CD8-positive, alpha-beta memory T cell (primary cell): ENCODE measurements at regions of chr20 and their contacts with region 1.

Region 1: GRCh38 chr20:62143118-62143973 is at the starts of genes PSMA7 and SS18L1:
- DNase-seq: peak; percentile 77 to 88 (median 87)
- H3K4me3 ChIP-seq: peak within 1 kb of the TSS; percentile 61
- H3K4me3 Mint-ChIP-seq: peak within 1 kb of the TSS; percentile 89 to 98 (median 92)
- H3K27ac ChIP-seq: peak within 1 kb of the TSS; percentile 72
- H3K27ac Mint-ChIP-seq: peak within 1 kb of the TSS; percentile 91 to 99 (median 96)
- H3K4me1 ChIP-seq: peaks cover 29% of the 10 kb centered on the region
- H3K4me1 Mint-ChIP-seq: peaks cover 40 to 64% (median 44%) of the 10 kb centered on the region in 3 donors
- H3K27me3 ChIP-seq: no peaks in the 10 kb centered on the region
- H3K27me3 Mint-ChIP-seq: peaks cover 0 to 2% of the 10 kb centered on the region in 2 donors
- total RNA-seq, gene PSMA7: 447 to 464 TPM
- total RNA-seq, gene SS18L1: 16.9 to 18.5 TPM

Region 2: DNA sequence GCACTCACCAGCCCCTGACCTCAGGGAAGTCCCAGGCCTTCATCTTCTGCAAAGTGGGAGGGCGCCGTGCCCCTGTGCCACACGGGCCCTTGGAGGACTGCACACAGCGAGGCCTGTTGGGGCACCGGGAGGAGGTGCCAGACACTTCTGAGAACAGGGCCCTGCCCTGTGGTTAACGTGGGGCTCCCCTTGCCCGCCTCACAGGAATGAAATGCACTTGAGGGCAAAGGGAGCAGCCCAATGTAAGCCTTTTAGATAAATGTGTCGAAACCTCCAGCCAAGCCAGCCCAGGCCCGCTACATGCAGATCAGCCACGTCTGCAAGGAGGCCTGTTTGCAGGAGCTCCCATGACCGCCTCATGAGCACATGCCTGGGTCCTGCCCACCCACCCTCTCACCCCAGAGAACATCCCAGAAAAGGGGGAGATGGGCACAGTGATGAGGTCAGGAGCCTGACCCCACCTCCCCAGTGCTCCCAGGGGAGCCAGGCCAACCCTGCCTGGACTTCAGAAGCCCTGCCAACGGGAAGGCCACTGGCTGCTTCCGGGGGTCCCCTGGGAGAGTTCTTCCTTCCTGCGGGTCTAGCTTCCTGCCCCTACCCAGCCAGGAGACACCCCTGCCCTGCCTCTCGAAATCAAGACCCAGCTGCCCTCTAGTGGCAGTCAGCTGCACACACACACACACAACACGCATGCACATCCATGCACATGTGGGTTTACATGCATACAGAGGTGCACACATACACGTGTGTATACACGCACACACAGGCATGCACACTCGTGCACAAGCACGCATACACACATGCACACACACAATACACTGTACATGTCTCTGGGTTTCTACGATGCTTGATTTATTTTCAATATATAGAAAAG is 256.4 kb before region 1 on chr20:
- CTCF ChIA-PET with region 1: no interaction called
- POLR2A ChIA-PET with region 1: no interaction called
- DNase-seq: peak in 1 of 5 donors; percentile 13
- H3K4me3 ChIP-seq: no peak overlapping the region
- H3K4me3 Mint-ChIP-seq: no peak overlapping the region
- H3K27ac ChIP-seq: no peak overlapping the region
- H3K27ac Mint-ChIP-seq: peak overlapping the region in 1 of 8 donors; percentile 51
- H3K4me1 ChIP-seq: no peaks in the 10 kb centered on the region
- H3K4me1 Mint-ChIP-seq: peaks cover 0 to 4% (median 3%) of the 10 kb centered on the region in 3 donors
- H3K27me3 ChIP-seq: no peaks in the 10 kb centered on the region
- H3K27me3 Mint-ChIP-seq: peaks cover 9 to 20% of the 10 kb centered on the region in 2 donors

Region 3: DNA sequence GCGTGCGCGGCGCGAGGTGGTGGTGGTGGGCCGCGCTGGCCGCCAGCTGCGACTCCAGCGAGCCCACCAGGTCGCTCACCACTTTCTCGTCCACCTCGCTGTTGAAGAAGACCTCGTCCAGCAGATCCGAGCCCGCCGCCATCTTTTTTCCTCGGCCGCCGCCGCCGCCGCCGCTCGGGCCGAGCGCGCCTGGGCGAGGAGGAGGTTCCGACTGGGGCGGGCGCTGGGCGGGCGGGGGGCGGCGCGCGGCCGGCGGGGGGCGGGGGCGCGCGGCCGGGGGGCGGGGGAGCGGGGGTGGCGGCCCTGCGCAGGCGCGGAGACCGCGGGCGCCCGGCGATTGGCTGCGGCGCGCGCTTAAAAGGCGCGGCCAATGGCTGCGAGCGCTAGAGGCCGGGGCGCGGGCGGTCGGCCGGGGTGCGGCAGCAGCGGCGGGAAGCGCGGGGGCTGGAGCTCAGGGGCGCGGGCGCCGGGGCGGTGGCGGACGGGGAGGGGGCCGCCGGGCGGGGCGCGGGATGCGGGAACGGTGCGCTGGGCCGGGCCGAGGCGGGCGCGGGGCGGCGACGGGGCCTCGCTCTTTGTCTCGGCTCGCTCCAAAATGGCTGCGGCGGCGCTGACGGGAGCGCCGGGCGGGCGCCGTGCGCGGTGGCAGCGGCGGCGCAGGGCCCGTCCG is 77.5 kb before region 1 on chr20 and contains the start of gene TAF4:
- CTCF ChIA-PET with region 1: no interaction called
- POLR2A ChIA-PET with region 1: interaction called, 21 read pairs
- DNase-seq: peak; percentile 74 to 87 (median 79)
- H3K4me3 ChIP-seq: peak within 1 kb of the TSS; percentile 84
- H3K4me3 Mint-ChIP-seq: peak within 1 kb of the TSS; percentile 86 to 92 (median 88)
- H3K27ac ChIP-seq: peak within 1 kb of the TSS; percentile 67
- H3K27ac Mint-ChIP-seq: peak within 1 kb of the TSS; percentile 84 to 98 (median 90)
- H3K4me1 ChIP-seq: peaks cover 45% of the 10 kb centered on the region
- H3K4me1 Mint-ChIP-seq: peaks cover 42 to 52% (median 46%) of the 10 kb centered on the region in 3 donors
- H3K27me3 ChIP-seq: no peaks in the 10 kb centered on the region
- H3K27me3 Mint-ChIP-seq: peaks cover 3 to 6% of the 10 kb centered on the region in 2 donors
- total RNA-seq, gene TAF4: 20.5 to 21.0 TPM

Region 4: DNA sequence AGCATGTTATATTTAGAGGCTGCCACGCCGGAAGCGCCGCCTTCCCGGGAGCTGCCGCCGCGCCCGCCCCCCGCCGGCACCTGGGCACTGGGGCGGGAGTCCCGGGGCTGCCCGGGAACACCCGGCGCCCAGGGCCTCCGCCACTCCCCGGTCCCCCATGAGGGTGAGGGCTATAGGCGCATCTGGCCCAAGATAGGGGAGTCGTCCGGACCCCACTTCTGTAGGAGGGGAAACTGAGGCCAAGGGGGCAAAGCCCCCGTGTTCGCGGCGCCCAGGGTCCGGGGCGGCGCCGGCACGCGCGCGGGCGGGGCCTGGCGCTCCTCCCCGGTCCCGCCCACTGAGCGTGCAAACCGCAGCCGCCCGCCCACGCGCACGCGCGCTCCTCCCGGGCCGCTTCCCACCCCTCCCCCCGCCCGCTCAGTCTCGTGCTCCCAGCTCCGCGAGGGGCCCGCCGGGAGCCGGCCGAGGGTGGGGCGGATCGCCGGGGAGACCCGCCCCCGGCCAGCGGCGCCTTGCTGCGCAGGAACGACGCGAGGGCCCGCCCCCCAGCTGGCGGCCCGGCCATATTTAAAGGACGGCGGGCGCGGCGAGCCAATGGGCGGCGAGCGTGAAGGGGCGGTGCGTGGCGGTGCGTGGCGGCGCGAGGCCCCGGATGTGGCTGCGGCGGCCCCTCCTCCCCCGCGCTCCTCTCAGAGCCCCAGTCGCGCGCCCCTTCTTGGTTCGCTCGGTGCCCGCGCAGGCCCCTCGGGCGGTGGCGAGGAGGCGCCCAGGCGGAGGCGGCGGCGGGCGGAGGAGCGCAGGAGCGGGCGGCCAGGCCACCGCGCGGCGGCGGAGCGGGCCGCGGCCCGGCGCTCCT is 21.3 kb before region 1 on chr20 and contains the start of gene LSM14B:
- CTCF ChIA-PET with region 1: interaction called, 6 read pairs
- POLR2A ChIA-PET with region 1: interaction called, 21 read pairs
- DNase-seq: peak; percentile 91 to 97 (median 96)
- H3K4me3 ChIP-seq: peak within 1 kb of the TSS; percentile 60
- H3K4me3 Mint-ChIP-seq: peak within 1 kb of the TSS; percentile 88 to 93 (median 90)
- H3K27ac ChIP-seq: peak within 1 kb of the TSS; percentile 76
- H3K27ac Mint-ChIP-seq: peak within 1 kb of the TSS; percentile 87 to 98 (median 96)
- H3K4me1 ChIP-seq: peaks cover 52% of the 10 kb centered on the region
- H3K4me1 Mint-ChIP-seq: peaks cover 46 to 62% (median 51%) of the 10 kb centered on the region in 3 donors
- H3K27me3 ChIP-seq: no peaks in the 10 kb centered on the region
- H3K27me3 Mint-ChIP-seq: peaks cover 0 to 3% of the 10 kb centered on the region in 2 donors
- total RNA-seq, gene LSM14B: 35.8 to 36.4 TPM